ENCODE measurements at regions of chr3 and their contacts with region 1.

Region 1: GRCh38 chr3:40179016-40179415 is 130.5 kb upstream of the EIF1B start:
- DNase-seq: peak; percentile 80
- H3K4me3 ChIP-seq: no peak overlapping the region
- H3K27ac ChIP-seq: no peak overlapping the region
- H3K4me1 ChIP-seq: no peaks in the 10 kb centered on the region
- H3K27me3 ChIP-seq: no peaks in the 10 kb centered on the region
- CTCF ChIP-seq: peak; percentile 68 to 69
- POLR2A ChIP-seq: no peak

Region 2: GRCh38 chr3:38960953-38961622 is 1217.9 kb before region 1 on chr3:
- CTCF ChIA-PET with region 1: no interaction called
- POLR2A ChIA-PET with region 1: no interaction called
- dilution Hi-C with region 1: no loop called
- intact Hi-C with region 1: no loop called
- DNase-seq: peak; percentile 57
- H3K4me3 ChIP-seq: no peak overlapping the region
- H3K27ac ChIP-seq: no peak overlapping the region
- H3K4me1 ChIP-seq: no peaks in the 10 kb centered on the region
- H3K27me3 ChIP-seq: peaks cover 3 to 4% of the 10 kb centered on the region in 2 experiments
- CTCF ChIP-seq: peak; percentile 74 to 76
- POLR2A ChIP-seq: no peak

Region 3: GRCh38 chr3:39414421-39414907 is 764.6 kb before region 1 on chr3:
- CTCF ChIA-PET with region 1: interaction called, 3 read pairs
- POLR2A ChIA-PET with region 1: no interaction called
- dilution Hi-C with region 1: no loop called
- intact Hi-C with region 1: loop called (anchors 1 kb)
- DNase-seq: no peak
- H3K4me3 ChIP-seq: no peak overlapping the region
- H3K27ac ChIP-seq: no peak overlapping the region
- H3K4me1 ChIP-seq: peaks cover 5% of the 10 kb centered on the region
- H3K27me3 ChIP-seq: no peaks in the 10 kb centered on the region
- CTCF ChIP-seq: no peak
- POLR2A ChIP-seq: peak; percentile 85

Region 4: DNA sequence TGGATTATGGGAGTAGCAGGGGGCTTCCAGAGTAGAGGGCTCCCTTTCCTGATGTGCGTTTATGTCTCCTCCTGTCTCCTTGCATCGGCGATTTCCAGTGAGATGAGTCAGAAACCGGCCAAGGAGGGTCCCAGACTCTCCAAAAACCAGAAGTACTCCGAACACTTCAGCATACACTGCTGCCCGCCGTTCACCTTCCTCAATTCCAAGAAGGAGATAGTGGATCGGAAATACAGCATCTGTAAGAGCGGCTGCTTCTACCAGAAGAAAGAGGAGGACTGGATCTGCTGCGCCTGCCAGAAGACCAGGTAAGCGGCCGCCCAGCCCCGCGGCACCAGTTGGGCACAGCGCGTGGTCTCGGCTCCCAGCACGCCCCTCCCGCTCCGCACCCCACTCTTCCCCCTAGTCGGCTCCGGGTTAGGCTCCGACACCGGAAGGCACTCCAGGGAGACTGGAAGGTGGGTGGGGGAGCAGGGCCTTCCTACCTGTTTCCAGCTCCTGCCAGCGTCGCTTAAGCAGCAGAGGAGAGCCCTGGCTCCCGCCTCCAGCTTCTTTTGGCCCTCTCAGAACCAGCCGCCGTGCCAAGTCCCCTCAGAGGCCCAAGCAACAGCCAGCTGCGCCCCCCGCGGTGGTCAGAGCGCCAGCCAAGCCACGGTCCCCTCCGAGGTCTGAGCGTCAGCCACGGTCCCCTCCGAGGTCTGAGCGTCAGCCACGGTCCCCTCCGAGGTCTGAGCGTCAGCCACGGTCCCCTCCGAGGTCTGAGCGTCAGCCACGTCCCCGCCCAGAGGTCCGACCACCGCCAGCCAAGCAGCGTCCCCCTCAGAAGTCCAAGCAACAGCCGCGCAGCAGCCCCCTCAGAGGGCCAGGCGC is 676.8 kb before region 1 on chr3:
- CTCF ChIA-PET with region 1: interaction called, 10 read pairs
- POLR2A ChIA-PET with region 1: no interaction called
- dilution Hi-C with region 1: no loop called
- intact Hi-C with region 1: loop called (anchors 1 kb)
- DNase-seq: no peak
- H3K4me3 ChIP-seq: peak overlapping the region; percentile 49 to 64 (median 63)
- H3K27ac ChIP-seq: peak overlapping the region; percentile 46
- H3K4me1 ChIP-seq: peaks cover 23% of the 10 kb centered on the region
- H3K27me3 ChIP-seq: peaks cover 0 to 6% of the 10 kb centered on the region in 2 experiments
- CTCF ChIP-seq: no peak
- POLR2A ChIP-seq: no peak

Region 5: DNA sequence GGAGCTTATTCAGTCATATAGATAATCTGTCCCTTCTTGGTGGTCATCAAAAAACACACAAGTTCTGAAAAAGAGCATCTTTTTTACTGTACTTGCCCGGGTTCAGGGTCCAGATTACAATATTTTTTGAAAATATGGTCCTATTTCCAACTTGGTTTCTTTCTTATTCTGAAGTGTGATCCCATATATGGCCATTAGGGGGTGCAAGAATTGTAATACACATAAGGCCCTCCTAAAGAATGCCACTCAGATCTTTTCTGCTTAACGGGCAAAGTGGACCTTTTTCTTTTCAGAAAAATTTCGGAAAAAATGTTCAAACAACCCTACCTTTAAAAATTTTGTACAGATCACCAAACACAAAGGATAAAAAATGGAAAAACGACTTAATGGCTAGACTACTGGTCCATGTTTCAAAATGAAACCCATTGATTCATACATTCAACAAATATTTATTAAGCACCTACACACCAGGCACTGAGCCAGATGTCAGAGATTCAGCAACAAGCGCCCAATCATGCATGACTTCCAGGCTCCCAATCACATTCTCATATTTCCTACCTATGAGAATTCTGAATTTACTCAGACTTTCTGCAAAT is 471.6 kb before region 1 on chr3:
- CTCF ChIA-PET with region 1: interaction called, 18 read pairs
- POLR2A ChIA-PET with region 1: no interaction called
- dilution Hi-C with region 1: no loop called
- intact Hi-C with region 1: loop called (anchors 1 kb)
- DNase-seq: peak; percentile 65
- H3K4me3 ChIP-seq: no peak overlapping the region
- H3K27ac ChIP-seq: no peak overlapping the region
- H3K4me1 ChIP-seq: peaks cover 7% of the 10 kb centered on the region
- H3K27me3 ChIP-seq: no peaks in the 10 kb centered on the region
- CTCF ChIP-seq: peak; percentile 39 to 61
- POLR2A ChIP-seq: no peak

Region 6: DNA sequence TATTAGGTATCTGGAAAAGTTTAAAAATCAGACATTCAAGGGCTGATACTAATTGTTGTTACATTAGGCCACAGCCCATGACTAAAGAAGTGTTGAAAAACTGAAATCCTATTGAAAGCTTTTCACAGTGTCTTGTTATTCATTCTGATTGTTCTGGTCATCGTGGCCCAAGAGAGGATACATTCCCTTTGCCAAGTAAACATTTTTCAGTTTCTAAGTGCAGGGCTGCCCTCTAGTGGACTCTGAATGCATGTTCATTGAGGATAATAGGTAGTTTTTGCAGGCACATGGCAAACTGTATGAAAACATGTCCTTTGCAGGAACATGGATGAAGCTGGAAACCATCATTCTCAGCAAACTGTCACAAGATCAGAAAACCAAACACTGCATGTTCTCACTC is 188.5 kb before region 1 on chr3:
- CTCF ChIA-PET with region 1: interaction called, 5 read pairs
- POLR2A ChIA-PET with region 1: no interaction called
- dilution Hi-C with region 1: no loop called
- intact Hi-C with region 1: loop called (anchors 1 kb)
- DNase-seq: peak; percentile 70
- H3K4me3 ChIP-seq: no peak overlapping the region
- H3K27ac ChIP-seq: no peak overlapping the region
- H3K4me1 ChIP-seq: no peaks in the 10 kb centered on the region
- H3K27me3 ChIP-seq: no peaks in the 10 kb centered on the region
- CTCF ChIP-seq: peak; percentile 34 to 36
- POLR2A ChIP-seq: no peak

Region 7: DNA sequence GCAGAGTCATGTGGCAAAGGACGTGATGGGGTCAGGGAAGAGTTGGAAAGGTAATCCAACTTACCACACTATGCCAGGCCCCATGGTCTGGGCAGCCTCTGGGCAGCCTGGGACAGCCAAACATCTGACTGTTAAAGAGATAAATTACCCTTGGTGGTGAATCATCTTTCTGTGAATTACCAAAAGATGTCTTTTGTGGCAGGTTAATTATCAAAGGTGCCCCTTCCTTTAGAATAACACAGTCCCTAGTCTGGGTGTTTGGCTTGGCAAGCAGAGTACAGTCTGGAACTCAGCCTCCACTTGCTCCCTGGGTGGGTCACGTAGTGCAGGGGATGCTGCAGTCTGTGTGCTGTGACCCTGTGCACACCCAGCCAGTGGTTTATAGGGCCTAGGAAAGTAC is 458.9 kb after region 1 on chr3:
- CTCF ChIA-PET with region 1: no interaction called
- POLR2A ChIA-PET with region 1: no interaction called
- dilution Hi-C with region 1: no loop called
- intact Hi-C with region 1: no loop called
- DNase-seq: no peak
- H3K4me3 ChIP-seq: no peak overlapping the region
- H3K27ac ChIP-seq: no peak overlapping the region
- H3K4me1 ChIP-seq: no peaks in the 10 kb centered on the region
- H3K27me3 ChIP-seq: no peaks in the 10 kb centered on the region
- CTCF ChIP-seq: no peak
- POLR2A ChIP-seq: no peak

Measured in endothelial cell of umbilical vein (primary cell).